ENCODE measurements at regions of chr5 and their contacts with region 1.

Region 1: DNA sequence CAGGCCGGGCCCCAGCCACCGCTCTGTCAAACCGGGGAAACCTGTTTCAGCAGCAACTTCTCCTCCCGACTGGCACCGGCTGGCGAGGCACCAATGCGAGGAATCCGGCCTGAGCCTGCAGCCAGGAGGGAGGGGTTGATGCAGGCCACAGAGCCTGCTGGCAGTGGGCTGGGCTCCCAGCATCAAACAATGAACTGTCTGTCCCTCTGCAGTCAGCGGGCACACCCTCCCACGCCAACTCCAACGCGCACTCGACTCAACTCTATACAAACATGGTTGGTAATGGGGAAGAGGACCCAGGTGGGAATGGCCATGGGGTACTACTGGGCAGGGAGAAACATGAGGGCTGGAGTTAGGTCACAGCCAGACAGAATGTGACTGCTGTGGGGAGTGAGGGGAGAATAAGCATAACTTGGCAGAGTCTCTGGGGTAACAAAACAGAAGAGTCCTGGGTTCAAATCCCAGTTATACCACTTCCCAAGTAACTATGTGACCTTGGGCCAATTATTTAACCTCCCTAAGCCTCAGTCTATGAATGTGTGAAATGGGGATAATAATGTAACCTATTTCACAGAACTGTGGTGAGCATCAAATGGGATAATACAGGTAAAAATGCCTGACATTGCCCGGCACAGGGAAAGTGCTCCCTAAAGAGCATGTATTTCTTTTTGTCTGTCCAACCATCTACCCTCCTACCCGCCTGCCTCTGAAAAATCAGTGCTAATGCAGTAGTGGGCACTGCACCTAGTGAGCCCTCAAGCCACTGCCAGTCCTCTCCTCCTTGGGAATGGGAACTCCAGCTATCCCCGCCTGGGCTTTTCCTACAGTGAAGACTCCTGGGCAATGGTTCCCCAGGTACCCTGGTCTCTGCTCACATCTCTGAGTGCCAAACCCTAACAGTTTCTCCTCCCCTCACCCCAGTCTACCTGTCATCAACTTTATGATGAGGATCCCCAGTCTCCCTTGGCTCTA is 11.8 kb downstream of the PCDH1 start:
- DNase-seq: peak; percentile 95 to 96
- H3K4me3 ChIP-seq: peak overlapping the region; percentile 1; the same call in 1 of the 2 replicates
- H3K27ac ChIP-seq: peak overlapping the region; percentile 78
- H3K4me1 ChIP-seq: peaks cover 71% of the 10 kb centered on the region
- H3K27me3 ChIP-seq: no peaks in the 10 kb centered on the region
- CTCF ChIP-seq: no peak

Region 2: GRCh38 chr5:141849375-141850243 is 16.8 kb before region 1 on chr5:
- CTCF ChIA-PET with region 1: interaction called, 6 read pairs
- POLR2A ChIA-PET with region 1: no interaction called
- intact Hi-C with region 1: loop called (anchors 1 kb)
- DNase-seq: peak; percentile 72 to 89
- H3K4me3 ChIP-seq: peak overlapping the region; percentile 98
- H3K27ac ChIP-seq: peak overlapping the region; percentile 99
- H3K4me1 ChIP-seq: peaks cover 41% of the 10 kb centered on the region
- H3K27me3 ChIP-seq: no peaks in the 10 kb centered on the region
- CTCF ChIP-seq: no peak

Region 3: DNA sequence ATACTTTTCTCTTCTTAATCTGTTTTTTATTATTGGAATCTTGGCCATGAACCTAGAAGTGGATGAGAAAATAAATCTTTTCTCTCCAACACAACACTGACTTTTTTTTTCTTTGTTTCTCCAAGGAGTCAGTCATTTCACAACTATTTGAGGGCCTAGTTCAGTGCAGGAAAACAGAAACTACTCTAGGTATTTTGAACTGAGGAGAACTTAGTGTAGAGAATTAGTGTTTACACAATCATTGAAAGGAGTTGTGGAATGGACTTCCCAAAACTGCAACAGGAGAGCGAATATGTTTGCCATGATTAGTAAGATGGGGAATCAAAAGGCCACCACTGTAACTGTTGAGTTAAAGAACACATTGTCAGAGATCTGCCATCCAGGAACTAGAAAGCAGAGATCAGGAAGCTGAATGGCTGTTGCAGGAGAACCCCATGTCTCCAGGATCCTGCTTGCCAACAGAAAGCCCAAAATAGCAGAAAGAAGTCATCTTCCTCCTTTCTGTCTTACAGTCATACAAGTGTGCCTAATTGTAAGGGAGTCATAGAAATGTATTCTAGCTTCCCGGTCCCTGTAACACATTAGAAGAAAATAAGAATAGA is 32.1 kb after region 1 on chr5:
- CTCF ChIA-PET with region 1: no interaction called
- POLR2A ChIA-PET with region 1: no interaction called
- intact Hi-C with region 1: loop called (anchors 2 kb)
- DNase-seq: peak in 1 of 2 experiments; percentile 58
- H3K4me3 ChIP-seq: no peak overlapping the region
- H3K27ac ChIP-seq: peak overlapping the region; percentile 46
- H3K4me1 ChIP-seq: peaks cover 12% of the 10 kb centered on the region
- H3K27me3 ChIP-seq: no peaks in the 10 kb centered on the region
- CTCF ChIP-seq: no peak

Measured in PC-9 (cell line).